MCF 10A (cell line): ENCODE measurements at regions of chr12 and their contacts with region 1.

Region 1: DNA sequence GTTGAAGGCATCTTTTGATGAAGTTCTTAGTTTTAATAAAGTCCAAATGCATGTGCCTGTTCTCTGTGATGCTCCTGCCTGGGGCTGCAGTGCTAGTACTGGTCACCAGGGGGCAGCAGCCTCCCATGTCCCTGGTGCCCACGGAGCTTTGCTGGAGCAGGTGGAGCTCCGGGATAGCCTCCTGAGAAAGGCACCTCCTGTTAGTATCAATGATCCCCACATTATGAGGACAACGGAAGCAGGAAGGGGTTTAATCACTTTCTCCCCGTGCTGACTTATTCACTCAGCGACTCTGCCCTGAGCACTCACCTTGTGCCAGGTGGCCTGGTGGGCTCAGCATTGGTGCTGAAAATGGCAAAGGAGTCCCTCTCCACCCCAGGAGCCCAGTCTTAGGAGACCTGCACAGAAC is 123.0 kb upstream of the PZP start:
- DNase-seq: peak; percentile 58
- H3K4me3 Mint-ChIP-seq: no peak overlapping the region
- H3K27ac Mint-ChIP-seq: no peak overlapping the region
- H3K4me1 Mint-ChIP-seq: no peaks in the 10 kb centered on the region
- H3K27me3 Mint-ChIP-seq: no peaks in the 10 kb centered on the region
- CTCF ChIP-seq: peak; percentile 92

Region 2: GRCh38 chr12:8996682-8997360 is 334.4 kb before region 1 on chr12:
- CTCF ChIA-PET with region 1: no interaction called
- POLR2A ChIA-PET with region 1: no interaction called
- intact Hi-C with region 1: no loop called
- DNase-seq: peak; percentile 18
- H3K4me3 Mint-ChIP-seq: no peak overlapping the region
- H3K27ac Mint-ChIP-seq: no peak overlapping the region
- H3K4me1 Mint-ChIP-seq: no peaks in the 10 kb centered on the region
- H3K27me3 Mint-ChIP-seq: no peaks in the 10 kb centered on the region
- CTCF ChIP-seq: no peak

Region 3: GRCh38 chr12:9064201-9064814 is 266.9 kb before region 1 on chr12:
- CTCF ChIA-PET with region 1: interaction called, 8 read pairs
- POLR2A ChIA-PET with region 1: no interaction called
- intact Hi-C with region 1: loop called (anchors 10 kb)
- DNase-seq: peak; percentile 71
- H3K4me3 Mint-ChIP-seq: peak overlapping the region; percentile 79
- H3K27ac Mint-ChIP-seq: peak overlapping the region; percentile 79
- H3K4me1 Mint-ChIP-seq: peaks cover 13% of the 10 kb centered on the region
- H3K27me3 Mint-ChIP-seq: no peaks in the 10 kb centered on the region
- CTCF ChIP-seq: peak; percentile 38

Region 4: DNA sequence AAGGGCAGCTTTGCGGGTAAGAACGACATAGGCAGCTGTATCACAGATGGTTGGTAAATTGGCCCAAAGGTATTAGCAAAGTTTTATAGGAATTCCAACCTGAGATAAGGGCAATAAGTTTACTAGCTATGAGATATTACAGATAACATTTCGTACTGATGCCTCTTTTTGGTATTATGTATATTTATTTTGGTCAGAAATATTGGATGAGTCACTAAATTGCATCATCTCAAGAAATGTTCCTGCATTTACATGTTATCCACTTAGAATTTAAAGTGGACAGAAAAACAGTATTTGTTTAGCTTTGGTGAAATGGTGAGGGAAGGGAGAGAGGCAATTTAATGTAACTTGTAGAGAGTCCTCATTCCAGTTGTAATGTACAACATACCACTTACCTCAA is 57.9 kb before region 1 on chr12:
- CTCF ChIA-PET with region 1: no interaction called
- POLR2A ChIA-PET with region 1: no interaction called
- intact Hi-C with region 1: no loop called
- DNase-seq: peak; percentile 51
- H3K4me3 Mint-ChIP-seq: peak overlapping the region; percentile 4
- H3K27ac Mint-ChIP-seq: peak overlapping the region; percentile 97
- H3K4me1 Mint-ChIP-seq: peaks cover 36% of the 10 kb centered on the region
- H3K27me3 Mint-ChIP-seq: no peaks in the 10 kb centered on the region
- CTCF ChIP-seq: no peak

Region 5: DNA sequence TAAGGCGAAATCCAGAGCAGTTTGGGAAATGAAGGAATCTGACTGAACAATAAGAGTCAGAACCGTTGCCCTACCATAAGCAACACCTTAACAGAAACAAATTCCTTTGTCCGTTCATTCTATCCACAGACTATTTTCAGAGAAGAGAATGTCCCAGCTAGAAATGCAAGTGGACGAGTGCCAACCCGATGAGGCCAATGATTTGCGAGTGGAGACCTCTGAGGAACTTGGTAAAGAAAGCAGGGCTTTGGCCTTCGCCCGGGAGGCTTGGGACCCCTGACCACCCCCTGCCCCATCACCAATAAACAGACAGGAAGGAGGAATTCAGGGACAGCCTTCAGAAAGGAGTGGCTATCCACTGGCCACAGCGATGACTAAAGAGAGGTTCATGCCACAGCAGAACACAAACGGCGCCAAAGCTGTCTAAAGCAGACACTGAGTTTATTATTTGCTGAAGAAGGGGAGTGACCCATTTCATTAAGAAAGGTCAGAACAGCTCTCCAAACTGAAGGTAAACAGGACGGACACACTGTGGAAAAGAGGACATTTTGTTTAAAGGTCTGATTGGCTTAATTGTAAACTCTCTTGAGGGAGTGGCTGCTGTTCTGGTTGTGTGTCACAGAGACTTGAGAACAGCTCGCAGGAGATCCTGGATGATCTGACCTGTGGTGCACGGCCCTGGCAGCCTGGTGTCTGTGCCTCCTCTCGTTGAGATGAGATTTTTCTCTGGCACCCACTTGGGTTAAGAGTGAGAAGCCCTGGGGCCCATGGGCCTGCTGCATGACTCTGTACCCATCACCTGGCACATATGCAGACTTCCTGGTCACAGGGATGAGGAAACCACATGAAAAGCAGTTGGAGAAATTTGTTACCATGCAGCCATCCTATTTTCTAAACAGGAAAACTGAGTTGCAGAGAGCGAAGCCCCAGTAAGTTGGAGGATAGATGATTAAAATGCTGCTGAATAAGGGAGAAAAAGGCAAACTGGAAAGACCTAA is 19.0 kb after region 1 on chr12:
- CTCF ChIA-PET with region 1: interaction called, 10 read pairs
- POLR2A ChIA-PET with region 1: interaction called, 4 read pairs
- intact Hi-C with region 1: no loop called
- DNase-seq: peak; percentile 29
- H3K4me3 Mint-ChIP-seq: no peak overlapping the region
- H3K27ac Mint-ChIP-seq: peak overlapping the region; percentile 85
- H3K4me1 Mint-ChIP-seq: peaks cover 21% of the 10 kb centered on the region
- H3K27me3 Mint-ChIP-seq: no peaks in the 10 kb centered on the region
- CTCF ChIP-seq: no peak

Region 6: GRCh38 chr12:9372202-9372601 is 41.0 kb after region 1 on chr12:
- CTCF ChIA-PET with region 1: interaction called, 26 read pairs
- POLR2A ChIA-PET with region 1: no interaction called
- intact Hi-C with region 1: loop called (anchors 1 kb)
- DNase-seq: peak; percentile 33
- H3K4me3 Mint-ChIP-seq: no peak overlapping the region
- H3K27ac Mint-ChIP-seq: no peak overlapping the region
- H3K4me1 Mint-ChIP-seq: no peaks in the 10 kb centered on the region
- H3K27me3 Mint-ChIP-seq: no peaks in the 10 kb centered on the region
- CTCF ChIP-seq: no peak

Region 7: DNA sequence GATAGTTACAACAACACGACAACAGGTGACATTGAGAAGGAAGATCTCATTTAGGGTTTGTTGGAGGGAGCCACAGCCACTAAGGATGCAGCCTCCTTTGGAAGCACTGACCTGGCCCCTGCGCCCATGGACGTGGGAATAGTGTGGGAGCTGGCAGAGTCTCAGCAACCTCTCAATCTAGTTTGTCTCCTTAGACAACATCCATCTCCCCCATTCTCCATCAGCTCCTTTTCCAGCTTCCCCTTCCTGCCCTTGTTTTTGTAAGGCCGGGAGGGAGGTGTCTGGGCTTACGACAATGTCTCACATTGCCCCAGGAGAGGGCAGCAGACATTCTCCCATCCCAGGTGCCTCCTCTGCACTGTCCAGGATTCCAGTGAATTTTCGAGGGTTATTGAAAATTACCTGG is 47.2 kb after region 1 on chr12:
- CTCF ChIA-PET with region 1: interaction called, 21 read pairs
- POLR2A ChIA-PET with region 1: no interaction called
- intact Hi-C with region 1: no loop called
- DNase-seq: peak; percentile 45
- H3K4me3 Mint-ChIP-seq: no peak overlapping the region
- H3K27ac Mint-ChIP-seq: no peak overlapping the region
- H3K4me1 Mint-ChIP-seq: no peaks in the 10 kb centered on the region
- H3K27me3 Mint-ChIP-seq: no peaks in the 10 kb centered on the region
- CTCF ChIP-seq: peak; percentile 44

Region 8: GRCh38 chr12:9634177-9634803 is 303.1 kb after region 1 on chr12:
- CTCF ChIA-PET with region 1: interaction called, 9 read pairs
- POLR2A ChIA-PET with region 1: no interaction called
- intact Hi-C with region 1: loop called (anchors 2 kb)
- DNase-seq: peak; percentile 79
- H3K4me3 Mint-ChIP-seq: no peak overlapping the region
- H3K27ac Mint-ChIP-seq: no peak overlapping the region
- H3K4me1 Mint-ChIP-seq: no peaks in the 10 kb centered on the region
- H3K27me3 Mint-ChIP-seq: no peaks in the 10 kb centered on the region
- CTCF ChIP-seq: peak; percentile 73

Region 9: GRCh38 chr12:9707864-9708808 is 376.9 kb after region 1 on chr12:
- CTCF ChIA-PET with region 1: interaction called, 10 read pairs
- POLR2A ChIA-PET with region 1: interaction called, 6 read pairs
- intact Hi-C with region 1: loop called (anchors 1 kb)
- DNase-seq: peak; percentile 67
- H3K4me3 Mint-ChIP-seq: no peak overlapping the region
- H3K27ac Mint-ChIP-seq: no peak overlapping the region
- H3K4me1 Mint-ChIP-seq: peaks cover 15% of the 10 kb centered on the region
- H3K27me3 Mint-ChIP-seq: no peaks in the 10 kb centered on the region
- CTCF ChIP-seq: peak; percentile 83

Region 10: DNA sequence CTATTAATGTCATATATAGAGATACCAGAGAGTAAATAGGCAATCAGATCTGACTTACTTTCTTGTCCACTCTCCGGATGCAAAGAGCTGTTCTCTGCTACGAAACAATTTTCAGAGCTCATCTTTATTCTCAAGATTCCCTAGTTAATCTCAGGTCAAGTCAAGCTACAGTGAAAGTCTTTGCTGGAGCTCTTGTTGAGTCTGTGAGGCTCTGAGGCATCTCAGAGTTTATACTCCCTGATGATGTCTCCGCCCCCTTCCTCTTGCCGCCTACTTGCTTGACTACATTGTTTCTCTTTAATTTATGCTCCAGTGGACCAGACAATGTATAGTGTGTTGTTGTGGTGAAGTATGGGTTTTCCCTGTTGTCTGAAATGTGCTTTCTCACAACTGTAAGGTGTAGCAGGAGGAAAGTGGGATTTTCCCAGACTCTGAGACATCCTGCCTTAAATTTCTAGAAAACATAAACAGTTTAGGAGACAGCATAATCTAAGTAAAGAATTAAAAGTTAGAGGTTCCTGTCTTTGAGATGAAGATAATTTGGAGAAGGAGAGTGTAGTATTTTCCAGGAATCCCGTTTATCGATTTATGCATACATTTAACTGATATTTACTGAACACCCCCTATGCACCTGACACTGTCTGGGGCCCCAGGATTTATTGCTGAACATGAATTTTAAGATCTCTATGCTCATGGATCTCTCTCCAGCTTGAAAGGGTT is 429.6 kb after region 1 on chr12 and contains the start of gene CD69:
- CTCF ChIA-PET with region 1: no interaction called
- POLR2A ChIA-PET with region 1: no interaction called
- intact Hi-C with region 1: no loop called
- DNase-seq: no peak
- H3K4me3 Mint-ChIP-seq: no peak within 1 kb of the TSS
- H3K27ac Mint-ChIP-seq: no peak within 1 kb of the TSS
- H3K4me1 Mint-ChIP-seq: no peaks in the 10 kb centered on the region
- H3K27me3 Mint-ChIP-seq: peaks cover 57% of the 10 kb centered on the region
- CTCF ChIP-seq: no peak
- total RNA-seq, gene CD69: not detected in 2 replicates